ENCODE measurements at regions of chr2 and their contacts with region 1.

Region 1: GRCh38 chr2:86440631-86441391 is at the start of gene KDM3A:
- DNase-seq: peak; percentile 99
- H3K4me3 ChIP-seq: peak within 1 kb of the TSS; percentile 82
- H3K27ac ChIP-seq: peak within 1 kb of the TSS; percentile 91
- H3K4me1 ChIP-seq: peaks cover 20% of the 10 kb centered on the region
- CTCF ChIP-seq: no peak
- total RNA-seq, gene KDM3A: 14.5 and 30.6 TPM in 2 replicates

Region 2: GRCh38 chr2:86105252-86105968 is 335.4 kb before region 1 on chr2 and contains the start of gene POLR1A:
- CTCF ChIA-PET with region 1: no interaction called
- POLR2A ChIA-PET with region 1: interaction called, 4 read pairs
- intact Hi-C with region 1: loop called (anchors 5 kb)
- DNase-seq: peak; percentile 92
- H3K4me3 ChIP-seq: peak within 1 kb of the TSS; percentile 87
- H3K27ac ChIP-seq: peak within 1 kb of the TSS; percentile 68
- H3K4me1 ChIP-seq: peaks cover 25% of the 10 kb centered on the region
- CTCF ChIP-seq: no peak
- total RNA-seq, gene POLR1A: 17.5 and 24.0 TPM in 2 replicates

Region 3: GRCh38 chr2:86221066-86221684 is 219.6 kb before region 1 on chr2:
- CTCF ChIA-PET with region 1: interaction called, 3 read pairs
- POLR2A ChIA-PET with region 1: interaction called, 3 read pairs
- intact Hi-C with region 1: loop called (anchors 10 kb)
- DNase-seq: peak; percentile 72
- H3K4me3 ChIP-seq: no peak overlapping the region
- H3K27ac ChIP-seq: no peak overlapping the region
- H3K4me1 ChIP-seq: peaks cover 24% of the 10 kb centered on the region
- CTCF ChIP-seq: peak; percentile 89

Region 4: GRCh38 chr2:86426272-86426671 is 14.5 kb before region 1 on chr2:
- CTCF ChIA-PET with region 1: no interaction called
- POLR2A ChIA-PET with region 1: no interaction called
- intact Hi-C with region 1: no loop called
- DNase-seq: no peak
- H3K4me3 ChIP-seq: no peak overlapping the region
- H3K27ac ChIP-seq: no peak overlapping the region
- H3K4me1 ChIP-seq: no peaks in the 10 kb centered on the region
- CTCF ChIP-seq: no peak

Region 5: GRCh38 chr2:86468162-86469033 is 27.6 kb after region 1 on chr2:
- CTCF ChIA-PET with region 1: no interaction called
- POLR2A ChIA-PET with region 1: interaction called, 11 read pairs
- intact Hi-C with region 1: no loop called
- DNase-seq: no peak
- H3K4me3 ChIP-seq: no peak overlapping the region
- H3K27ac ChIP-seq: no peak overlapping the region
- H3K4me1 ChIP-seq: no peaks in the 10 kb centered on the region
- CTCF ChIP-seq: no peak

Region 6: GRCh38 chr2:86512034-86512433 is 71.2 kb after region 1 on chr2:
- CTCF ChIA-PET with region 1: no interaction called
- POLR2A ChIA-PET with region 1: no interaction called
- intact Hi-C with region 1: no loop called
- DNase-seq: no peak
- H3K4me3 ChIP-seq: no peak overlapping the region
- H3K27ac ChIP-seq: no peak overlapping the region
- H3K4me1 ChIP-seq: no peaks in the 10 kb centered on the region
- CTCF ChIP-seq: no peak

Region 7: GRCh38 chr2:86584151-86584913 is 143.5 kb after region 1 on chr2:
- CTCF ChIA-PET with region 1: interaction called, 10 read pairs
- POLR2A ChIA-PET with region 1: no interaction called
- intact Hi-C with region 1: no loop called
- DNase-seq: no peak
- H3K4me3 ChIP-seq: no peak overlapping the region
- H3K27ac ChIP-seq: no peak overlapping the region
- H3K4me1 ChIP-seq: no peaks in the 10 kb centered on the region
- CTCF ChIP-seq: no peak